ENCODE measurements at regions of chr13 and their contacts with region 1.

Region 1: GRCh38 chr13:24220086-24220703 is 59.7 kb downstream of the SPATA13 start:
- DNase-seq: peak; percentile 75
- CTCF ChIP-seq: peak; percentile 83

Region 2: DNA sequence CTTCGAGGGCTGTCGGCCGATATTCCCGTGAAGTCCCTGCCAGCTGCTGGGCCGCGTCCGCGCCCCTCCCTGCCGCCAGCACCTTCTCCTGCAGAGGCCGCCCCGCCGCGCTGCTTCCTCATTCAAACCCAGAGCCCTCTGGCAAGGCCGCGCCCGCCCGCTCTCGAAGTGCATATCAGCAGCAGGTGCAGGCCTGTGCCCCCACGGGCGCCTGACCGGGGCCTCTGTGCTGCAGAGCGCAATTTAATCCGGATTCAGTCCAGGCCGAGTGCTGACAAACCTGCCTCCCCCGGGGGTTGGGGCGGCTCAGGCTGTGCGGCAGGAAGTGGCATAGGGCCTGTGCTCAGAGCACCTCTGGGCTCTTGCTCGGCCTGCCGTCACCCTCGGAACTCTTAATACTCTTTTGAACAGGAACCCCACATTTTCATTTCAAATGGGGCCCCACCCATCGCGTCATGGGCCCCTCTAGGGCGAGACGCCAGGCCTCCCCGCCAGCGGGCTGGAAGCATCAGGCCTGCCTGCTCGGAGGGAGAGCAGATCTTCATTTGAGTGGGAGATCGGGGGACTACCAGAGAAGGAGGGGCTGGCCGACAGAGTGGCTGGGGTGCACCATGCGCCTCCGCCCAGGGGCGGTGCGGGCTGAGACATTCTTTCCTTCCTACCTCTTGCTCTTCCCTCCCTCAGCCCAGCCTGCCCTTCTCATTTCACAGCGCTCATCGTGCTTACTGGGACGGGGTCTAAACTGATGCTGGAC is 524.3 kb before region 1 on chr13:
- in situ Hi-C with region 1: no loop called
- DNase-seq: peak; percentile 72
- CTCF ChIP-seq: no peak

Region 3: DNA sequence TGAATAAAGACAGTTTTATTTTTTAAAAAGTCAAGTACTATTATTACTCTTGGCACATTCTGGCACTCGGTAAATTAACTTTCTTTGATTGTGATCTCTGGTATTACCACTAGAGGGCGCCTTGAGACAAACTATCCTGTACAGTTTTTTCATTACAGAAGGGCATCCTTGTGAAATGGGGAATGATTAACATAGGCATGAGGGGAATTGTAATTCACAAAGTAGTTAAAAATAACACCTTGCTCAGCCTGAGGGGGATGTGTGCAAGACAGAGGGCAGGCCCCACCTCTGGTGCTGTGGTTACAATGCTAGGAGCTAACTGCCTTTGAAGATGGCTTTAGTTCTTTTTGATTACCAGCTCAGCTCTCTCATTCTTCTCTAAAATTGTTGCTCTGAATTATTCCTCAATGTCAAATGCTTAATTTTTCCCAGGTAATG is 298.7 kb before region 1 on chr13:
- in situ Hi-C with region 1: loop called (anchors 25 kb)
- DNase-seq: peak; percentile 41
- CTCF ChIP-seq: peak; percentile 67

Region 4: GRCh38 chr13:24038841-24039330 is 181.3 kb before region 1 on chr13:
- in situ Hi-C with region 1: loop called (anchors 25 kb)
- DNase-seq: no peak
- CTCF ChIP-seq: no peak